Mammary epithelial cell (primary cell): ENCODE measurements at regions of chr1 and their contacts with region 1.

Region 1: DNA sequence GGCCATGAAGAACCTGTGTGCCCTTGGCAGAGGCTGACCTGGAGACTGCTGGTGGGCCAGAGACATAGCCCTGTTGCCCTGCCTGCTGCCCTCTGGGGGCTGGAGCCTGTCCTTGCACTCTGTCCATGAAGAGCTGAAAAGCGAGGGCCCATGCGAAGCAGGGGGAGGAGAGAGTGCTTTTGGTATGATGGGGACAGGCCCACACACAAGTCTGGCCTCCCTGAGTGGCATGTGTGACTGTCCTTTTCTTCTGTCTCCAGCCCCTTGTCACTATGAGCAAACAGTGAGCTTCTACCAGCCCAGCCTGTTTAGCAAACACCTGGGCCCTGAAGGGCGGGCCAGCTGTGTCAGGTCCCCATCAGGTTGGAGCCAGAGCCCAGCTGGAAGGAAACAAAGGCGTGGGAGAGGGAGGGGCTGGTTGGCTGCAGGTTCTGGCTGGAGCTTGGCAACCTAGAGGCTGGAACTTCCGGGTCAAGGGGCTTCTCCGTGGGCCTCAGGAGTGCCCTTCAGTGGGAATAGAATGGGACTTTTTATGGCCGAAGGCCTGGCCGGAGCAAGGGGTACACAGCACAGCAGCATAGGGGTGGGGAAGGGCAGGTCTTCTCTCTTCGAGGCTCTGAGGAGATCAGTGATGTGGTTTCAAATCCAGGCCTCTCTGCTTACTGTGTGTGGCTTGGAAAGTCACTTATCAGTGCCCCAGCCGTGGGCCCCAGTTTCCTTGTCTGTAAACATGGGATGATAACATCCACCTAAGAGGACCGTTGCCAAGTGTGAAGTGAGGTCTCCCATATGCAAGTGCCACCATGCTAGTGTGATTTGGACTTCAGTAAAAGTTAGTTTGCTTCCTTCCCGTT is 14.3 kb downstream of the QSOX1 start:
- DNase-seq: no peak
- H3K4me3 ChIP-seq: no peak overlapping the region
- H3K27ac ChIP-seq: no peak overlapping the region
- H3K4me1 ChIP-seq: peaks cover 32% of the 10 kb centered on the region
- H3K27me3 ChIP-seq: no peaks in the 10 kb centered on the region
- CTCF ChIP-seq: peak; percentile 51 to 66

Region 2: DNA sequence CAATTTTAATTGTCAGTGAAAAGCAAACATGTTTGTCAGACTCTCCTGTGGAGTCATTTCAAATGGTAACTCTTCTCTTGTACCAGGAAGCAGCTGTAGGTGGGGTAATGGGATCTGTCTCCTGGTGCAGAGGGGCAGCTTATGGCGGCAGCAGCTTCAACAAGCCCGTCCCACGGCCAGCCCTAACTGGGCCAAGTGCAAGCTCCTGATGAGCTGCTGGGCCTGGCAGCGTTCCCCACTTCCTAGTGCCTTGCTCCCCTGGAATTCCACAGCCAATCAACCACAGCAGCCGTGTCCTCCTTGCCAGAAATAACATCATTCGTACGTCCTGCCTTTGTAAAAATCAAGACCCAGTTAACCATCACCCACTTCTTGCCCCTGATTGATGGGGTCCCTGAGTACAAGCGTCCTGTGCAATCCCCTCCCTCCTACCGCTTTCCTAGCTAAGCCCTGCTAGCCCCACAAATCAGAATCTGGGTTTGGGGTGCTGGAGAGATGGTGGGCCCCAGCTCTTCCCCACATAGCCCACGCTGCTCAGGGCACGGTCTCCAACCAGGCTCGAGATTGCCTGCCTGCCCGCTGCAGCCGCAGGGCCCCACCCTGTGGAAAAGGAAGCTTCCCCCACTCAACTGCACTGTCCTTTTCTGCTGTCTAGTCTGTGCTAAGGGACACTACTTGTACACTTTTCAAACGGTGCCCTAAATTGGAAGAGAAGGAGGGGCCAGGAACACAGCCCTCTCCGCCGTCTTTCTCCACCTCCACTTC is 352.6 kb before region 1 on chr1:
- CTCF ChIA-PET with region 1: no interaction called
- dilution Hi-C with region 1: no loop called
- in situ Hi-C with region 1: no loop called
- intact Hi-C with region 1: loop called (anchors 5 kb)
- DNase-seq: no peak
- H3K4me3 ChIP-seq: no peak overlapping the region
- H3K27ac ChIP-seq: no peak overlapping the region
- H3K4me1 ChIP-seq: peaks cover 6% of the 10 kb centered on the region
- H3K27me3 ChIP-seq: peaks cover 3% of the 10 kb centered on the region
- CTCF ChIP-seq: no peak

Region 3: GRCh38 chr1:179867807-179868330 is 301.1 kb before region 1 on chr1:
- CTCF ChIA-PET with region 1: interaction called, 4 read pairs
- dilution Hi-C with region 1: no loop called
- in situ Hi-C with region 1: loop called in 1 of 2 experiments (anchors 10 kb)
- intact Hi-C with region 1: loop called (anchors 2 kb)
- DNase-seq: peak; percentile 25
- H3K4me3 ChIP-seq: no peak overlapping the region
- H3K27ac ChIP-seq: no peak overlapping the region
- H3K4me1 ChIP-seq: no peaks in the 10 kb centered on the region
- H3K27me3 ChIP-seq: no peaks in the 10 kb centered on the region
- CTCF ChIP-seq: peak; percentile 68 to 69

Region 4: DNA sequence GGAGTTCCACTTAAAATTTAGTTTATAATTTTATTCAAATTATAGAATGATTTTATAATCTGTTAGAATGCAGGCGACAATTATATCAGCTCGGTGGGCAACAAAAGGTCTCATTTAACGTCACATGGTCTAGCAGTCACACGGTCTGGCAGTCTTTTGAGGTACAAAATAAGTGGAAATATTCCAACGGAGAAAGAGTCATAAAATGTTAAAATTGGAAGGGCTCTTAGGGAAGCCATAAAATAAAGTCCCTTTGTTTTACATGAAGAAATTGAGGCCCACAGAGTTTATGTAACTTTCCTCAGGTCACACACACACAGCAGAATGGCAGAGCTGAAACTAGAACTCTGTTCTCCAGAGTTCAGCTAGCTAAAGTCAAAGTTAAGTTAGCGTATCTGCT is 98.7 kb before region 1 on chr1:
- CTCF ChIA-PET with region 1: interaction called, 4 read pairs
- dilution Hi-C with region 1: no loop called
- in situ Hi-C with region 1: no loop called
- intact Hi-C with region 1: loop called (anchors 5 kb)
- DNase-seq: no peak
- H3K4me3 ChIP-seq: no peak overlapping the region
- H3K27ac ChIP-seq: no peak overlapping the region
- H3K4me1 ChIP-seq: no peaks in the 10 kb centered on the region
- H3K27me3 ChIP-seq: no peaks in the 10 kb centered on the region
- CTCF ChIP-seq: no peak

Region 5: GRCh38 chr1:180116964-180117763 is 51.8 kb before region 1 on chr1:
- CTCF ChIA-PET with region 1: no interaction called
- dilution Hi-C with region 1: no loop called
- in situ Hi-C with region 1: no loop called
- intact Hi-C with region 1: loop called (anchors 5 kb)
- DNase-seq: peak; percentile 33
- H3K4me3 ChIP-seq: no peak overlapping the region
- H3K27ac ChIP-seq: no peak overlapping the region
- H3K4me1 ChIP-seq: peaks cover 17% of the 10 kb centered on the region
- H3K27me3 ChIP-seq: no peaks in the 10 kb centered on the region
- CTCF ChIP-seq: no peak

Region 6: DNA sequence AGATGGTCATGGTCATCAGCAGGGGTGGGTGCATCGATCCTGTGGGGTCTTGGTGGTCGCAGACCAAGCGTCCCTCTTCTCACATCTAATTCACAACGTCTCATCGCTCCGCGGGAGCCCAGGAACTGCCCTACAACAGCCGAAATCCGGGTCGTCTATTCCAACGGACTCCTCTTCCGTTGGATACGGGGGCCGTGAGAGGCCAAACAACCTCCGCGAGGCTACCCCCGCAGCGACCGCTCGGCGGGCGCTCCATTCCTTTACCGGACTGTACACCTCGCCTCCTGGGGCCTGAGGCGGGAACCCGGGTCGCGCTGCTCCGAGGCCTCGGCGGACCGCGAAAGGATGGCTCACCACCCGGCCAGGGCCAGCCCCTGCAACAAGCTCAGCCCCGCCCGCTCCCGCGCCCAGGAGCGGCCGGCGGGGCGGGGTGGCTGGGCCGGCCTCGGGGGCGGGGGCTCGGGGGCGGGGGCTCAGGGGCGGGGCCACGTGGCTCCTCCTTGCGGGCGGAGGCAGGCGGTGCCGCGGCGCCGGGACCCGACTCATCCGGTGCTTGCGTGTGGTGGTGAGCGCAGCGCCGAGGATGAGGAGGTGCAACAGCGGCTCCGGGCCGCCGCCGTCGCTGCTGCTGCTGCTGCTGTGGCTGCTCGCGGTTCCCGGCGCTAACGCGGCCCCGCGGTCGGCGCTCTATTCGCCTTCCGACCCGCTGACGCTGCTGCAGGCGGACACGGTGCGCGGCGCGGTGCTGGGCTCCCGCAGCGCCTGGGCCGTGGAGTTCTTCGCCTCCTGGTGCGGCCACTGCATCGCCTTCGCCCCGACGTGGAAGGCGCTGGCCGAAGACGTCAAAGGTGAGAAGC is 14.5 kb before region 1 on chr1 and contains the start of gene QSOX1:
- CTCF ChIA-PET with region 1: interaction called, 12 read pairs
- dilution Hi-C with region 1: no loop called
- in situ Hi-C with region 1: no loop called
- intact Hi-C with region 1: no loop called
- DNase-seq: peak; percentile 84
- H3K4me3 ChIP-seq: peak within 1 kb of the TSS; percentile 83 to 92 (median 83)
- H3K27ac ChIP-seq: peak within 1 kb of the TSS; percentile 50
- H3K4me1 ChIP-seq: peaks cover 34% of the 10 kb centered on the region
- H3K27me3 ChIP-seq: no peaks in the 10 kb centered on the region
- CTCF ChIP-seq: no peak
- total RNA-seq, gene QSOX1: 92.4 to 120 TPM

Region 7: DNA sequence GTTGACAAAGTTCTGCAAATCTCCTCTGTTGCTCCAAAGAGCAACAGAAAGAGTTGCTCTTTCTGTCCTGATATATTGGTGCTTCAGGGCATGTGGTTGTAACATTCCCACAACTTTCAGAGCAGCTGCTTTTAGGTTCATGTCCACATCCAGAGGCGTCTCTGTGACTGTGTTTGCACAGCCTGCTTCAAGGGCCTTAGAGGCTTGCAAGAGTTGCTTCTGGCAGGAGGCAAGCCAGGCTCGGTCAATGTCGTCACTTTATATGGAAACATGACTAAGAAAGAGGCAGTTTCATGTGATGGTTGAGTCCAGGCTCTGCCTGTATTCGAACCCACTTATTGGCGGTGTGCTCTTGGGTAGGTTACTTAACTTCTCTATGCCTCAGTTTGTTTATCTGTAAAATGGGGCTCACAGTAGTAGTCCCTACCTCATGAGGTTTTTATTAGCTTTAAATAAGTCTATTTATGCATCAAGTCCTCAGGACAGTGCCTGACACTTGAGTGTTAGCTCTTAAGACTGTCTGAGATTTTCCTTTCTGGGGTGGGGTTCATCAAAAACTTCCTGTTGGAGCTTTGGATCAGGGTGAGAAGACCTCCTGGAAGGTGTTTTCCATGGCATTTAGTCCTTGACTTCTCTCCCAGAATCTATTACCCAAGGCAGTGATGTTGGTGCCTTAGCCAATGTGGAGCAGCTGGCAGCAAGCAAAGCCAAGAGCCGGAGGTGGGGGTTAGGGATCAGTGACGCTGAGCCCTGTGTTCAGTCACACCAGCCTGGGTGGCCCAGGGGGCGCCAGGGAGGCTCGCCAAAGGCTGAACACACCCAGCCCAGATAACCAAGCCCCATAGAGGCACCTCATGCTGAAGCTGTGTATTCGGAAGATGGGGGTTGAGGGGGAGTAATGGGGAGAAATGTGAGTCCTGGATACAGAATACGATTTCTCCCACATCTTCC is 80.0 kb after region 1 on chr1:
- CTCF ChIA-PET with region 1: no interaction called
- dilution Hi-C with region 1: no loop called
- in situ Hi-C with region 1: no loop called
- intact Hi-C with region 1: no loop called
- DNase-seq: no peak
- H3K4me3 ChIP-seq: no peak overlapping the region
- H3K27ac ChIP-seq: no peak overlapping the region
- H3K4me1 ChIP-seq: no peaks in the 10 kb centered on the region
- H3K27me3 ChIP-seq: no peaks in the 10 kb centered on the region
- CTCF ChIP-seq: peak in 1 of 2 donors; percentile 12